Ascending aorta (tissue), 2 donors: ENCODE measurements at regions of chr1 and their contacts with region 1.

Region 1: GRCh38 chr1:59971464-59971911 is 44.9 kb upstream of the CYP2J2 start:
- DNase-seq: peak in 1 of 2 donors; percentile 81
- H3K4me3 ChIP-seq: peak overlapping the region in 1 of 2 donors; percentile 9
- H3K27ac ChIP-seq: no peak overlapping the region
- H3K4me1 ChIP-seq: peaks cover 0 to 3% of the 10 kb centered on the region in 2 donors
- H3K27me3 ChIP-seq: no peaks in the 10 kb centered on the region
- CTCF ChIP-seq: peak; percentile 86 to 96 (median 96)

Region 2: GRCh38 chr1:60132985-60133675 is 161.6 kb after region 1 on chr1:
- intact Hi-C with region 1: loop called (anchors 2 kb)
- DNase-seq: peak in 1 of 2 donors; percentile 85
- H3K4me3 ChIP-seq: peak overlapping the region in 1 of 2 donors; percentile 33
- H3K27ac ChIP-seq: peak overlapping the region; percentile 70 to 74
- H3K4me1 ChIP-seq: peaks cover 0 to 6% of the 10 kb centered on the region in 2 donors
- H3K27me3 ChIP-seq: no peaks in the 10 kb centered on the region
- CTCF ChIP-seq: no peak

Region 3: GRCh38 chr1:60171801-60172200 is 200.3 kb after region 1 on chr1:
- intact Hi-C with region 1: loop called (anchors 5 kb)
- DNase-seq: no peak
- H3K4me3 ChIP-seq: no peak overlapping the region
- H3K27ac ChIP-seq: no peak overlapping the region
- H3K4me1 ChIP-seq: no peaks in the 10 kb centered on the region
- H3K27me3 ChIP-seq: no peaks in the 10 kb centered on the region
- CTCF ChIP-seq: no peak

Region 4: DNA sequence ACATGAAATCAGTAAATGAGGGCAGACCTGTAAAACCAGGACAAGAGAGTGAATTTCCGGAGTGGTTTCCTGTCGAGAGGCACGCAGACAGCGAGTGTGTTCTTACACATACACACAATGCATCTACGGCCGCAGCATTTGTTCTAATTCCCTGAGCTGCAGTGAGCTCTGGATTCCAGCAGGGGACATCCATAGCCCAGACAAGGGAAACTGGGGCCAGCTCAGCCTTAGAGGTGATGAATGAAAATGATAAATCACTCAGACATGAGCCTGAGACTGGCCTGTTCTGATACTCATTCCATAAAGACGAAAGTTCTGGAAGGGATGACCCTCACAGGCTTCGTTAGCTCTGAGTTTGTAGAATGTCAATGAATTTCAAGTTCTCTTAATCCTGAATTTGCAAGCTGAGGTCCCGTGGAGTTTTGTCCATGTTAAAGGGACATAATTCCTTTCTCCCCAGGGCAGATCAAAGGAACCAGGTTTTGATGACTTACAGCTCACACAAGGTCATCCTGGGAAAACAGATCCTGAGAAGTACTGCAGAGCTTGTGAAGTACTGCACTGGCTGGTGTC is 310.0 kb after region 1 on chr1:
- intact Hi-C with region 1: loop called (anchors 5 kb)
- DNase-seq: peak in 1 of 2 donors; percentile 79
- H3K4me3 ChIP-seq: no peak overlapping the region
- H3K27ac ChIP-seq: no peak overlapping the region
- H3K4me1 ChIP-seq: peaks cover 0 to 10% of the 10 kb centered on the region in 2 donors
- H3K27me3 ChIP-seq: no peaks in the 10 kb centered on the region
- CTCF ChIP-seq: peak; percentile 80 to 97 (median 96)

Region 5: GRCh38 chr1:60342569-60342968 is 371.1 kb after region 1 on chr1:
- intact Hi-C with region 1: no loop called
- DNase-seq: no peak
- H3K4me3 ChIP-seq: no peak overlapping the region
- H3K27ac ChIP-seq: no peak overlapping the region
- H3K4me1 ChIP-seq: no peaks in the 10 kb centered on the region
- H3K27me3 ChIP-seq: no peaks in the 10 kb centered on the region
- CTCF ChIP-seq: no peak

Region 6: GRCh38 chr1:60765204-60765603 is 793.7 kb after region 1 on chr1:
- intact Hi-C with region 1: loop called (anchors 10 kb)
- DNase-seq: no peak
- H3K4me3 ChIP-seq: no peak overlapping the region
- H3K27ac ChIP-seq: no peak overlapping the region
- H3K4me1 ChIP-seq: no peaks in the 10 kb centered on the region
- H3K27me3 ChIP-seq: no peaks in the 10 kb centered on the region
- CTCF ChIP-seq: peak in 2 of 3 experiments; percentile 38 to 49

Region 7: GRCh38 chr1:61043010-61043820 is 1071.7 kb after region 1 on chr1:
- intact Hi-C with region 1: loop called (anchors 1 kb)
- DNase-seq: peak; percentile 38 to 94
- H3K4me3 ChIP-seq: peak overlapping the region; percentile 58 to 83
- H3K27ac ChIP-seq: peak overlapping the region; percentile 93 to 98
- H3K4me1 ChIP-seq: no peaks in the 10 kb centered on the region
- H3K27me3 ChIP-seq: no peaks in the 10 kb centered on the region
- CTCF ChIP-seq: peak; percentile 92 to 95 (median 92)